ENCODE measurements at regions of chr9 and their contacts with region 1.

Region 1: GRCh38 chr9:76987594-76988200 is 31.8 kb upstream of the FOXB2 start:
- H3K4me3 ChIP-seq: no peak overlapping the region
- H3K27ac ChIP-seq: no peak overlapping the region
- H3K4me1 ChIP-seq: no peaks in the 10 kb centered on the region
- CTCF ChIP-seq: no peak

Region 2: GRCh38 chr9:76761448-76761847 is 226.2 kb before region 1 on chr9:
- CTCF ChIA-PET with region 1: interaction called, 10 read pairs
- POLR2A ChIA-PET with region 1: no interaction called
- H3K4me3 ChIP-seq: no peak overlapping the region
- H3K27ac ChIP-seq: no peak overlapping the region
- H3K4me1 ChIP-seq: no peaks in the 10 kb centered on the region
- CTCF ChIP-seq: no peak

Region 3: GRCh38 chr9:77142366-77142765 is 154.7 kb after region 1 on chr9:
- CTCF ChIA-PET with region 1: interaction called, 10 read pairs
- POLR2A ChIA-PET with region 1: no interaction called
- H3K4me3 ChIP-seq: no peak overlapping the region
- H3K27ac ChIP-seq: no peak overlapping the region
- H3K4me1 ChIP-seq: no peaks in the 10 kb centered on the region; the same call in 1 of the 2 replicates
- CTCF ChIP-seq: no peak

Region 4: GRCh38 chr9:77328102-77328501 is 340.4 kb after region 1 on chr9:
- CTCF ChIA-PET with region 1: no interaction called
- POLR2A ChIA-PET with region 1: no interaction called
- H3K4me3 ChIP-seq: no peak overlapping the region
- H3K27ac ChIP-seq: no peak overlapping the region
- H3K4me1 ChIP-seq: no peaks in the 10 kb centered on the region
- CTCF ChIP-seq: no peak